A673 (cell line): ENCODE measurements at regions of chr15 and their contacts with region 1.

Region 1: DNA sequence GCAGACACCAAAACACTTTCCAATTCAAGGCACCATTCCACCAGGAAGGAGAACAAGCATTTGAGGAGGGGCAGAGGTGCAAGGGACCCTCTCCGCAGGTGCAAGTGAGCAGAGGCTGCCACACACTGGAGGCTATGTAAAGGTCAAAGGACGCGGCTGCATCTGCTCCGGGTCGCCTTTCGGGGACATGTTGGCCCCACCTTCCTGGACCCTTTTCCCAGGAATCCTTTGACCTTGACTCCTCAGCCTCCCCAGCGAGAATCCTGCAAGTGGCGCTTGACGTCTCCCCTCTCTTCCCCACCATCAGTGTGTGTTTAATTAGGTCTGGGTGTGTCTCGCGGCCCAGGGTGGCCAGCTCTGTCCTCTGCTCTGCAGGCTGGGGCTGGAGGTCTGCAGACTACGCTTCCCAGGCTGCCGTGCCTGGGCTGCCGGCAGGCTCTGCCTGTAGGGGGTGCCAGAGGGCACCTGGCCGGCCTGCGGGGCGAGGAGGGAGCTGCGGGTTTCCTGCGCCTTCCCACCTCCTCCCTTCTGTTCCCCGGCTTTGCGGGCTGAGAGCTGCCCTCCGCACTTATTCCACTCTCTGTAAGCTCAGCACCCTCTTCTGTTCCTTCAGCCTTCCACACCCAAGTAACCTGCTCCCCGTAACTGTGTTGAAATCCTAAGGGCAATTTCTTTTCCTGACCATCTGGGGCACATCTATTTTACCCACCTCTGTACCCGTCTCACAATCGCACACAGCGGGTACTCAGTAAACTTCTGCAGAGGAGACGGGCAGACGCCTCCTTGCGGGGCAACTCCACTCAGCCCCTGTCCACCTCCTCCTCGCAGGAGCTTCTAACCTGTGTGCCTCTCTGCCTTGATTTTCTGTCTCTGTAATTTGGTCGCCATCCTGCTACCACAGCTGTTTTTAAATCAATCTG is 129.8 kb downstream of the NSMCE3 start:
- DNase-seq: peak; percentile 62
- H3K4me3 ChIP-seq: no peak overlapping the region
- H3K27ac ChIP-seq: no peak overlapping the region
- H3K4me1 ChIP-seq: no peaks in the 10 kb centered on the region
- H3K27me3 ChIP-seq: peaks cover 5% of the 10 kb centered on the region
- CTCF ChIP-seq: peak; percentile 91

Region 2: GRCh38 chr15:29269485-29270168 is 129.8 kb after region 1 on chr15 and contains the start of gene NSMCE3:
- CTCF ChIA-PET with region 1: no interaction called
- POLR2A ChIA-PET with region 1: no interaction called
- intact Hi-C with region 1: loop called (anchors 5 kb)
- DNase-seq: peak; percentile 90
- H3K4me3 ChIP-seq: peak within 1 kb of the TSS; percentile 87
- H3K27ac ChIP-seq: peak within 1 kb of the TSS; percentile 86
- H3K4me1 ChIP-seq: peaks cover 7% of the 10 kb centered on the region
- H3K27me3 ChIP-seq: no peaks in the 10 kb centered on the region
- CTCF ChIP-seq: no peak
- total RNA-seq, gene NSMCE3: 7.2 and 8.0 TPM in 2 replicates